Activated CD4-positive, alpha-beta T cell treated with anti-CD3 and anti-CD28 coated beads for 36 hours (primary cell): ENCODE measurements at regions of chr19 and their contacts with region 1.

Region 1: DNA sequence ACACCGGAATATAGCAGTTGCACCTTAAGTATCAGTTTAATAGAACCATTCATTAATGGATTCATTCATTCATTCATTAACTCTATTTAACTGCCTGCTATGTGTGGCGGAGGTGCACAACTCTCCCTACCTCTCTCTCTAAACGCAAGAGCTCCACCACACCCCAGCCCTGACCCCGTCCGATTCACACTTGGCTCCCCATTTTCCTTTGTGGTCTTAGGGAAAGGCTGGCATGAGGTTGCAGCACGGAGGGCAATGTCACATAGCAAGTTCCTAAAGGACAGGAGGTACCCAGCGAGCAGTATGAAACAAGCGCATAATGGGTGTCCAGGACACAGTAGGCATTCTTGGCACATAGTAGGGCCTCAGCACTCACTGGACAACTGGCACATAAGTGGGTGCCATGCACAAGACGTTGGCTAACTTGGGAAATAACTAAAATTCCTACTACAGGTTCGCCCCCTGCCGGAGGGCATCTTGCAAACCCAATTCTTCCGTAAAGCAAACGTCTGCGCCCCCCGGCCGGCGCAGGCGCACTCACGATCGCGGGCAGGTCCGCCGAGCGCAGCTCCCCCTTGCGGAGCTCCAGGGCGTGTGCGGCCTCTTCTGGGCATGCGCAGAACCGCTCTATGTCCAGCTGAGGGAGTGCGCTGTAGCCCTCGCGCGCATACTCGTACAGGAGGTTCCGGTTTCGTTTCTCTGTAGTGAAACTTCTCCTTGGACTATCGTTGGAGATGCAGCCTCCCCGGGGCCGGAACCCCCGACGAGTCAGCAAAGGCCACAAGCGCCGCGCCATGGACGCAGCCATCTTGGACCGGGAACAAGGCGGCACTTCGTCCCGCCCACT is at the start of gene SARS2:
- DNase-seq: peak; percentile 95
- ATAC-seq: peak; percentile 69
- H3K4me3 Mint-ChIP-seq: peak within 1 kb of the TSS; percentile 81
- H3K27ac Mint-ChIP-seq: peak within 1 kb of the TSS; percentile 92
- H3K4me1 Mint-ChIP-seq: peaks cover 28% of the 10 kb centered on the region
- H3K27me3 Mint-ChIP-seq: no peaks in the 10 kb centered on the region
- total RNA-seq, gene SARS2: 36.7 to 39.4 TPM

Region 2: DNA sequence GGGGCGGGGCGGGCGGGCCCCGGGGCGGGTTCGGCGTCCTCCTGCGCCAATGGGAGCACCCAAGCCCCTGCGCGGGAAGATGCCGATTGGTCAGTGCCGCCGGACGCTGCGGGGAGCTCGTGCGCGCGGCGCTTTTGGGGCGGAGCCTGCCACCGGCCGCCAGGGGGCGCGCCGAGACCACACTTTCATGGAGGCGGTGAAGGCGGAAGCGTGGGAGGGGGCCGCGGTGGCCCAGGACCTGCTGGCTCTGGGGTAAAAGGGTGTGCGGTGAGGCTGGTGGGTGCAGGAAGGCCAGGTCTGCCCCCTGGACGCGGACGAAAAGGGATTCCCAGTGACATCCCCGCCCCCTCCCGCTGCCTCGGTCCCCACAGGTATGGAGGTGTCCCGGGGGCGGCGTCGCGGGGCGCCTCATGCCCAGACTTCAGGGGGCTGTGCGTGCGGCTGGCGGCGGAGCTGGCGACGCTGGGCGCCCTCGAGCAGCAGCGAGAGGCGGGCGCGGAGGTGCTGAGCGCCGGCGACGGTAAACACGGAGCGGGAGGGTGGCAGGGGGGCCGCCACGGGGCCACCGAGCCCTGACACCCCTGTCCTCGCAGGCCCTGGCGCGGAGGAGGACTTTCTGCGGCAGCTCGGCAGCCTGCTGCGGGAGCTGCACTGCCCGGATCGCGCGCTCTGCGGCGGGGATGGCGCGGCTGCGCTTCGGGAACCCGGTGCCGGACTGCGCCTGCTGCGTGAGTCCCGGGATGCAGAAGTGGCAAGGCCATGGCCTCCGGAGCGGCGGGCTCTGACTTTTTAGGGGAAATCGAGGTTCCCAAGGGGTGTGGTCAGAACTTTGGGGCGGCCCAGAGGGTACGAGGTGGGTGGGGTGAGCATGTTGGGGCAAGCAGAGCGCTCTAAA is 526.9 kb before region 1 on chr19 and contains the start of gene FAM98C:
- CTCF ChIA-PET with region 1: interaction called, 7 read pairs
- POLR2A ChIA-PET with region 1: interaction called, 3 read pairs
- intact Hi-C with region 1: loop called (anchors 1 kb)
- DNase-seq: peak; percentile 99
- ATAC-seq: peak; percentile 99
- H3K4me3 Mint-ChIP-seq: peak within 1 kb of the TSS; percentile 84
- H3K27ac Mint-ChIP-seq: peak within 1 kb of the TSS; percentile 85
- H3K4me1 Mint-ChIP-seq: peaks cover 16% of the 10 kb centered on the region
- H3K27me3 Mint-ChIP-seq: no peaks in the 10 kb centered on the region
- total RNA-seq, gene FAM98C: 19.6 to 24.8 TPM

Region 3: GRCh38 chr19:38634757-38635482 is 295.2 kb before region 1 on chr19:
- CTCF ChIA-PET with region 1: interaction called, 5 read pairs
- POLR2A ChIA-PET with region 1: no interaction called
- intact Hi-C with region 1: loop called (anchors 1 to 2 kb)
- DNase-seq: peak; percentile 84
- ATAC-seq: no peak
- H3K4me3 Mint-ChIP-seq: no peak overlapping the region
- H3K27ac Mint-ChIP-seq: peak overlapping the region; percentile 90
- H3K4me1 Mint-ChIP-seq: peaks cover 28% of the 10 kb centered on the region
- H3K27me3 Mint-ChIP-seq: no peaks in the 10 kb centered on the region

Region 4: DNA sequence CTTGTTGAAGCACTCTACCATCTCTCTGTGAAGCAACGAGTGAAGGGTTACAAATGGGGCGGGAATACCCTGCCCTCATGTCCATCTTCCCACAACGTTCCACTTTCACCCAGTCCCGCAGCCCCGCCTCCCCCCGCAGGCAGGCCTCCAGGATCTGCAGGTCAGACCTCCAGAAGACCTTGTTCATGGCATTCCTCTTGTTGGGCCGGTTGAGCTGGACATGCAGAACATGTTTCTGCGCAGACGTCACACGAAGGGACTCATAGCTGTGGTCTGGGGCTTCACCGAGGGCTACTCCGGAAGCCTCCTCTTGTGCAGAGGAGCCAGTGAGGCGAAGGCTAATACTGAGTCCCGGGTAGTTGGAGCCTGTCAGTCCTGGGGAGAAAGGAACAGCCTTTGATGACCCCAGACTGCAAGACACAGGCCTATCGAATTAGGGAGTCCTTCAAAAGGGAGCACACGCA is 99.0 kb before region 1 on chr19:
- CTCF ChIA-PET with region 1: interaction called, 6 read pairs
- POLR2A ChIA-PET with region 1: interaction called, 3 read pairs
- intact Hi-C with region 1: loop called in 1 of 2 experiments (anchors 1 kb)
- DNase-seq: peak; percentile 58
- ATAC-seq: peak; percentile 53
- H3K4me3 Mint-ChIP-seq: peak overlapping the region; percentile 87
- H3K27ac Mint-ChIP-seq: peak overlapping the region; percentile 83
- H3K4me1 Mint-ChIP-seq: peaks cover 25% of the 10 kb centered on the region
- H3K27me3 Mint-ChIP-seq: no peaks in the 10 kb centered on the region

Region 5: DNA sequence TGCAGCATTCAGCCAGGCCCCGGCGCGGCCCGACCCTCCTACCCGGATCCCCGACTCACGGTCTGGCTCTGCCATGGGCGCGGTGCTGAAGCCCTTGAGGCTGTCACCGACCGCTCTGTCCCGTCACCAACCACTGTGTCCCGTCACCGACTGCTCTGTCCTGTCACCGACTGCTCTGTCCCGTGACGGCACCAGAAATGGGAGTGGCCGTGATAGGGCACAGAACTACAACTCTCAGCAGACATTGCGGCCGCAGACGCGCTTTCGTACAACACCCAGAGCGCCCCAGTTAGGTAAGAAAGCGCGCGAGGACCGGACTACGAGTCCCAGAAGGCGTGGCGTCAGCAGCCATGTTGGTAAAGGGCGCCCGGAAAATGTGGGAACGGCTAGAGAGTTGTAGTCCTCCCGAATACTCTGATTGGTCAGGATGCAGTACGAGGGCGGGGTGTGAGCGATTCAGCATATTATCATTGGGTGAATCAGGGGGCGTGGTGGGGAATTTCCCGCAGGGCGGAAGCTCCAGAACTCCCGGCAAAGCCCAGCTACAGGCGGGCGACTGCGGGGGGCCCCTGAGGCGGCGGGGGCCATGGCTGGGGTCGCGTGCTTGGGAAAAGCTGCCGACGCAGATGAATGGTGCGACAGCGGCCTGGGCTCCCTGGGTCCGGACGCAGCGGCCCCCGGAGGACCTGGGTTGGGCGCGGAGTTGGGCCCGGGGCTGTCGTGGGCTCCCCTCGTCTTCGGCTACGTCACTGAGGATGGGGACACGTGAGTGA is 30.5 kb before region 1 on chr19 and contains the starts of genes NFKBIB and SIRT2:
- CTCF ChIA-PET with region 1: interaction called, 23 read pairs
- POLR2A ChIA-PET with region 1: interaction called, 13 read pairs
- intact Hi-C with region 1: loop called (anchors 1 kb)
- DNase-seq: peak; percentile 100
- ATAC-seq: peak; percentile 93
- H3K4me3 Mint-ChIP-seq: peak within 1 kb of the TSS; percentile 88
- H3K27ac Mint-ChIP-seq: peak within 1 kb of the TSS; percentile 91
- H3K4me1 Mint-ChIP-seq: peaks cover 40% of the 10 kb centered on the region
- H3K27me3 Mint-ChIP-seq: no peaks in the 10 kb centered on the region
- total RNA-seq, gene NFKBIB: 49.4 to 52.5 TPM
- total RNA-seq, gene SIRT2: 17.8 to 23.1 TPM

Region 6: GRCh38 chr19:39341719-39342604 is 411.8 kb after region 1 on chr19 and contains the start of gene SAMD4B:
- CTCF ChIA-PET with region 1: no interaction called
- POLR2A ChIA-PET with region 1: no interaction called
- intact Hi-C with region 1: loop called in 1 of 2 experiments (anchors 1 kb)
- DNase-seq: peak; percentile 100
- ATAC-seq: peak; percentile 90
- H3K4me3 Mint-ChIP-seq: peak within 1 kb of the TSS; percentile 83
- H3K27ac Mint-ChIP-seq: peak within 1 kb of the TSS; percentile 88
- H3K4me1 Mint-ChIP-seq: peaks cover 69% of the 10 kb centered on the region
- H3K27me3 Mint-ChIP-seq: no peaks in the 10 kb centered on the region
- total RNA-seq, gene SAMD4B: 45.2 to 46.9 TPM